Activated CD4-positive, alpha-beta memory T cell treated with anti-CD3 and anti-CD28 coated beads for 36 hours (primary cell): ENCODE measurements at regions of chr12 and their contacts with region 1.

Region 1: GRCh38 chr12:122051231-122051876 is 27.2 kb upstream of the MLXIP start:
- DNase-seq: no peak
- H3K4me3 Mint-ChIP-seq: no peak overlapping the region
- H3K27ac Mint-ChIP-seq: no peak overlapping the region
- H3K4me1 Mint-ChIP-seq: peaks cover 4% of the 10 kb centered on the region
- H3K27me3 Mint-ChIP-seq: no peaks in the 10 kb centered on the region

Region 2: DNA sequence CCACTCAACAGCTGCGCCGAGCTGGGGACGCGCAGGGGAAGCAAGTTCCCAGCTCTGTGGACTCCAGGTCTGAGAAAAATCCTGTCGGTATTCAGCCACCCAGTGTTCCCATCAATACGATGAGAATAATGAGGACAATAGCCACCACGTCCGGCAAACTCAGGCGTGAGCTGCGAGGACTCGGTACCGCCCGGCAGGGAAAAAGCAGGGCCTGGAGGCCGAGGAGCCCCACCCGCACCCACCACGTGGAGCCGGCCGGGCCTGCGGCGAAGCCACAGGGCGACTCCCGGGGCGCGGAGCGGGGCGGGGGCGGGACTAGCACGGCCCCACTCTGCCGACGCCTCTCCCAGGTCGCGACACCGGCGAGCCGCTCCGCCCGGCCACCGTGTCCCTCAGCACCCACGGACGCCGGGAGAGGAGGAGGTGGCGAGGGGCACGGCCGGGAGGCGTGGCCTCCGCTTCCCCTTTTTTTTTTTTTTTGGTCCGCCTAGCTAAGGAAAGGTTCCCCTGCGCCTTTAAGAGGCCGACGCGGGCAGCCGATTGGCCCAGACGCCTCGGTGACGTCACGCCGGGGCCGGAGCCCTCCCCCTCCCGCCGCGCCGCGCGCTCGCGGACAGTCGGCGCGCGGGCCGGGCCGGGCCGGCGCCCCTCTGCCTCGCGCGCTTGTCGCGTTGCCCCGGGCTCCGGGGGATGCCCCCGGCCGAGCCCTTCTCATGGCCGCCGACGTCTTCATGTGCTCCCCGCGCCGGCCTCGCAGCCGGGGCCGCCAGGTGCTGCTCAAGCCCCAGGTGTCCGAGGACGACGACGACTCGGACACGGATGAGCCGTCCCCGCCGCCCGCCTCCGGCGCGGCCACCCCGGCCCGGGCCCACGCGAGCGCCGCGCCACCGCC is 27.0 kb after region 1 on chr12 and contains the start of gene MLXIP:
- CTCF ChIA-PET with region 1: interaction called, 11 read pairs
- POLR2A ChIA-PET with region 1: no interaction called
- intact Hi-C with region 1: no loop called
- DNase-seq: peak; percentile 93
- H3K4me3 Mint-ChIP-seq: peak within 1 kb of the TSS; percentile 83
- H3K27ac Mint-ChIP-seq: peak within 1 kb of the TSS; percentile 8
- H3K4me1 Mint-ChIP-seq: peaks cover 45% of the 10 kb centered on the region
- H3K27me3 Mint-ChIP-seq: no peaks in the 10 kb centered on the region
- total RNA-seq, gene MLXIP: 17.5 to 19.6 TPM

Region 3: GRCh38 chr12:122116707-122117535 is 65.6 kb after region 1 on chr12:
- CTCF ChIA-PET with region 1: interaction called, 159 read pairs
- POLR2A ChIA-PET with region 1: no interaction called
- intact Hi-C with region 1: no loop called
- DNase-seq: no peak
- H3K4me3 Mint-ChIP-seq: no peak overlapping the region
- H3K27ac Mint-ChIP-seq: no peak overlapping the region
- H3K4me1 Mint-ChIP-seq: peaks cover 15% of the 10 kb centered on the region
- H3K27me3 Mint-ChIP-seq: no peaks in the 10 kb centered on the region

Region 4: DNA sequence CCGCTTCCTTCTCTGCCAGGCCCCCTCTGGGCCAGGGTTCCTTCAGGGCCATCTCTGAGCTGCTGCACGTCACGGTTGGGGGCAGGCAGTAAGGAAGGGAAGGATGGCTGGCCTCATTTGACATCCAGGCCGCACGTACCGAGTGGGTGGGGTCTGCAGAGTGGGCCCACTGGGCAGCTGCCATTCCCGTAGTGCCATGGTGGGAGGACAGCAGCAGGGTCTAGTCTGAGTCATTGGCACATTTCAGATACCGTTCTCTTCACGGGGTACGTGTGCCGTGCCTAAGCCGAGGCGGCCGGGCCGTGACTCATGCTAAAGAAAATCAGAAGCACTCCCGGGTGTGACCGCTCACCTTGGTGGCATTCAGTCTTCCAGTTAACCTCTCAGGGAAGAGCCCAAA is 78.8 kb after region 1 on chr12:
- CTCF ChIA-PET with region 1: interaction called, 159 read pairs
- POLR2A ChIA-PET with region 1: no interaction called
- intact Hi-C with region 1: no loop called
- DNase-seq: no peak
- H3K4me3 Mint-ChIP-seq: no peak overlapping the region
- H3K27ac Mint-ChIP-seq: no peak overlapping the region
- H3K4me1 Mint-ChIP-seq: peaks cover 2% of the 10 kb centered on the region
- H3K27me3 Mint-ChIP-seq: no peaks in the 10 kb centered on the region